B cell (primary cell): ENCODE measurements at regions of chr5 and their contacts with region 1.

Region 1: GRCh38 chr5:175576096-175576495 is 81.8 kb upstream of the HRH2 start:
- DNase-seq: no peak
- ATAC-seq: no peak
- H3K4me3 ChIP-seq: no peak overlapping the region
- H3K4me3 Mint-ChIP-seq: no peak overlapping the region
- H3K27ac ChIP-seq: no peak overlapping the region
- H3K27ac Mint-ChIP-seq: no peak overlapping the region
- H3K4me1 ChIP-seq: no peaks in the 10 kb centered on the region
- H3K4me1 Mint-ChIP-seq: no peaks in the 10 kb centered on the region
- H3K27me3 ChIP-seq: peaks cover 0 to 3% (median 0%) of the 10 kb centered on the region in 4 experiments
- H3K27me3 Mint-ChIP-seq: peaks cover 29% of the 10 kb centered on the region
- CTCF ChIP-seq: no peak

Region 2: GRCh38 chr5:175590471-175590881 is 14.4 kb after region 1 on chr5:
- CTCF ChIA-PET with region 1: no interaction called
- POLR2A ChIA-PET with region 1: no interaction called
- intact Hi-C with region 1: no loop called
- DNase-seq: no peak
- ATAC-seq: no peak
- H3K4me3 ChIP-seq: no peak overlapping the region
- H3K4me3 Mint-ChIP-seq: no peak overlapping the region
- H3K27ac ChIP-seq: no peak overlapping the region
- H3K27ac Mint-ChIP-seq: no peak overlapping the region
- H3K4me1 ChIP-seq: no peaks in the 10 kb centered on the region
- H3K4me1 Mint-ChIP-seq: no peaks in the 10 kb centered on the region
- H3K27me3 ChIP-seq: peaks cover 0 to 2% (median 0%) of the 10 kb centered on the region in 4 experiments
- H3K27me3 Mint-ChIP-seq: peaks cover 6% of the 10 kb centered on the region
- CTCF ChIP-seq: no peak

Region 3: GRCh38 chr5:175624316-175624715 is 48.2 kb after region 1 on chr5:
- CTCF ChIA-PET with region 1: no interaction called
- POLR2A ChIA-PET with region 1: interaction called, 13 read pairs
- intact Hi-C with region 1: no loop called
- DNase-seq: no peak
- ATAC-seq: no peak
- H3K4me3 ChIP-seq: no peak overlapping the region
- H3K4me3 Mint-ChIP-seq: no peak overlapping the region
- H3K27ac ChIP-seq: no peak overlapping the region
- H3K27ac Mint-ChIP-seq: no peak overlapping the region
- H3K4me1 ChIP-seq: no peaks in the 10 kb centered on the region
- H3K4me1 Mint-ChIP-seq: no peaks in the 10 kb centered on the region
- H3K27me3 ChIP-seq: peaks cover 0 to 5% (median 0%) of the 10 kb centered on the region in 4 experiments
- H3K27me3 Mint-ChIP-seq: no peaks in the 10 kb centered on the region
- CTCF ChIP-seq: no peak